Heart left ventricle (tissue), 16 donors: ENCODE measurements at regions of chr20 and their contacts with region 1.

Region 1: DNA sequence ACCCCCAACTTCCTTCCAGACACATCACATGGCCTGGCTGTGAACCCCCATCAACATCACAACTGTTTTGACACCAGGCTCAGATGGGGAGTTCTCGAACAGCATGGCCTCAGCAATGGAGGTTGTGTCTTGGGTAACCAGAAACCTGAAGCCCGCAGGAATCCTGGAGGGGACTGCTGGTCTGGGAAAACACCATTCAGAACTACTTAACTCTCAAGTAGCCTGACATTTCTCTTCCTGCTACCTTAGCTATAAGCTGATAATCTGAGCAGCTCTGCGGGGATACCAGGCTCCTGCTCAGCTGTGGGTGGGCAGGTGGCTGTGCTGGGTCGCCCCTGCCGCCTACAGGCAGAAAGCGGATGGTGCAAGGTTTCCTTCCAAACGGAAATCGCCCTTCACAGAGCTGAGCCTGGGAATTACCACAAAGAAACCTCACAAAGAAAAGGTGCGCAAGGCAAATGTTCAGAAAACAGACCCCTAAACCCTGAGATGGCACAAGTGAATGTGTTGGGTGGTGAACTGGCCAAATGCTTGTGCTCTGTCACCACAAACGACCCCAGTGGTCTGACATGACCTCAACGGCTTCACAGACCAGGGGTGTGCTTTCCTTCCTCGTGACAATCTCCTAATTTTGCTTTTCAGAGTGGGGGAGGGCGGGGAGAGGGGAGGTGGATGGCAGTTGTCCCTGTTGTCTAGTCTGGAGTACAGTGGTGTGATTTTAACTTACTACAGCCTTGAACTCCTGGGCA is 29.5 kb downstream of the SNX5 start:
- DNase-seq: peak in 4 of 5 donors; percentile 53 to 69 (median 66)
- ATAC-seq: peak; percentile 47 to 83 (median 78)
- H3K4me3 ChIP-seq: no peak overlapping the region
- H3K27ac ChIP-seq: peak overlapping the region in 2 of 12 donors; percentile 37 to 38
- H3K4me1 ChIP-seq: peaks cover 0 to 57% (median 24%) of the 10 kb centered on the region in 12 donors
- H3K27me3 ChIP-seq: no peaks in the 10 kb centered on the region
- CTCF ChIP-seq: peak; percentile 80 to 91 (median 88)
- POLR2A ChIP-seq: no peak

Region 2: DNA sequence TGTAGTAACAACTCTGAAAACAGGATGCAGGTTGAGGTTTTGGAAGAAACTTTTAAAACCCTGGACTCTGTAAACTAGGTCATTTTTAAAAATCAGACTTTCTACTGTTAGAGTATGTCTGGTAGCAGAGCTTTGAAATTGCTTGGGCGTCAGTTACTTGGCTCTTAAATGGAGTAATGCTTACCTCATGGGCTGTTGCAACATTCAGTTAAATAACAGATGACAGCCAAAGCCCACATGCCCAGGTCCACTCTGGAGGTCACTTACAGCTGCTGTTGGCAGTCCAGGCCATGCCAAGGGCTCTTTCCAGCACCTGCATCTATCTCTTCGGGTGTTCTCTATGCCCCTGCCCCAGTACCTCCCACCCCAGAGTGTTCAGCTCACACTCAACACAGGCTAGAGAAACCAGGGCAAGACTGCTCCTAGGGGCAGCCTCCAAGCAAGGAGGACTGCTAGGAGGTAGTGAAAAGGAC is 142.9 kb before region 1 on chr20:
- intact Hi-C with region 1: no loop called
- DNase-seq: peak in 4 of 5 donors; percentile 24 to 67 (median 50)
- ATAC-seq: peak; percentile 81 to 92 (median 86)
- H3K4me3 ChIP-seq: no peak overlapping the region
- H3K27ac ChIP-seq: peak overlapping the region; percentile 31 to 85 (median 64)
- H3K4me1 ChIP-seq: peaks cover 0 to 20% (median 8%) of the 10 kb centered on the region in 12 donors
- H3K27me3 ChIP-seq: no peaks in the 10 kb centered on the region
- CTCF ChIP-seq: no peak
- POLR2A ChIP-seq: no peak

Region 3: DNA sequence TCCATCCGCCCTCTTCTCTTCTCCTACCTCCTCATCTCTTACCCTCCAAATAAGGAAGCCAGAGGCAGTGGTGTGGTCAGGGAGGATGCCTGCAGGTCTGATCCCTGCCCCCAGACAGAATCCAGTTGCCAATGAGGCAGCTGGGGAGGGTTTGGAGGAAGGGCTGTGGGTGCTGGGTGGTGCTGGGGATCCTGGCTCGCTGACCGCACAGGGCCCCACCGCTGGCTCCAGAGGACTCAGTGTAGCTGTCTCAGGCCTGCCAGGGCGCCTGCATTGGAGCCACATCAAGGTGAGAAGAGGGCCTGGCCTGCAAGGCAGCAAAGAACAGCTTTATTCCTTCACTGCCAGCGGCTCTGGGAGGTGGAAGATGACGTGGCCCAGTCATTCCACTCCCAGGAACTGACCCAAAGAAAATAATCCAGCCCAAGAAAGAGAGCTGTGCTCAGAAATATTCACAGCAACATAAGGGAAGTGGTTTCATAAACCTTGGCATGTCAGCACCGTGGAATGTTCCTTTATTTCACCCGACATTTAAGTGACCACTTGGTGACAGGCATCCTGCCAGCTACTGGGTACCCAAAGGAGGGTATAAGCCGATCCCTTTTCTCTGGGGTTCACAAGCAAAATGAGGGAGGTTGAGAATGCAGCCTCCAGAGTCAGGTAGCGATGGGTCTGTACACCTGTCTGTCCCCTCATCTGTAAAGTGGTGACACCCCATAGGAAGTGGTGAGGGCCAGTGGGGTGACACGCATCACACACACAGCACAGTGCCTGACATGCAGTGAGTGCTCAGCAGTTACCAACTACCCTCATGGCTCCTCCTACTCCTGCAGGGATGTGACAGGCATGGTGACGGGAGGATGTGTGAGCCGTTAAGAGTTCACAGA is 95.6 kb before region 1 on chr20:
- intact Hi-C with region 1: loop called in 1 of 10 experiments (anchors 5 kb)
- DNase-seq: peak; percentile 60 to 73 (median 71)
- ATAC-seq: peak in 3 of 4 donors; percentile 67 to 85 (median 77)
- H3K4me3 ChIP-seq: no peak overlapping the region
- H3K27ac ChIP-seq: peak overlapping the region in 11 of 12 donors; percentile 44 to 87 (median 72)
- H3K4me1 ChIP-seq: peaks cover 4 to 51% (median 25%) of the 10 kb centered on the region in 12 donors
- H3K27me3 ChIP-seq: no peaks in the 10 kb centered on the region
- CTCF ChIP-seq: no peak
- POLR2A ChIP-seq: no peak